IMR-90 (cell line): ENCODE measurements at regions of chr1 and their contacts with region 1.

Region 1: GRCh38 chr1:110495926-110496600 is 22.9 kb downstream of the KCNA10 start:
- DNase-seq: peak; percentile 71
- ATAC-seq: peak; percentile 96
- H3K4me3 ChIP-seq: no peak overlapping the region
- H3K27ac ChIP-seq: no peak overlapping the region
- H3K4me1 ChIP-seq: no peaks in the 10 kb centered on the region
- H3K27me3 ChIP-seq: peaks cover 22% of the 10 kb centered on the region
- CTCF ChIP-seq: peak; percentile 99; the same call in 1 of the 2 replicates
- POLR2A ChIP-seq: no peak
- RAD21 ChIP-seq: peak; percentile 100

Region 2: DNA sequence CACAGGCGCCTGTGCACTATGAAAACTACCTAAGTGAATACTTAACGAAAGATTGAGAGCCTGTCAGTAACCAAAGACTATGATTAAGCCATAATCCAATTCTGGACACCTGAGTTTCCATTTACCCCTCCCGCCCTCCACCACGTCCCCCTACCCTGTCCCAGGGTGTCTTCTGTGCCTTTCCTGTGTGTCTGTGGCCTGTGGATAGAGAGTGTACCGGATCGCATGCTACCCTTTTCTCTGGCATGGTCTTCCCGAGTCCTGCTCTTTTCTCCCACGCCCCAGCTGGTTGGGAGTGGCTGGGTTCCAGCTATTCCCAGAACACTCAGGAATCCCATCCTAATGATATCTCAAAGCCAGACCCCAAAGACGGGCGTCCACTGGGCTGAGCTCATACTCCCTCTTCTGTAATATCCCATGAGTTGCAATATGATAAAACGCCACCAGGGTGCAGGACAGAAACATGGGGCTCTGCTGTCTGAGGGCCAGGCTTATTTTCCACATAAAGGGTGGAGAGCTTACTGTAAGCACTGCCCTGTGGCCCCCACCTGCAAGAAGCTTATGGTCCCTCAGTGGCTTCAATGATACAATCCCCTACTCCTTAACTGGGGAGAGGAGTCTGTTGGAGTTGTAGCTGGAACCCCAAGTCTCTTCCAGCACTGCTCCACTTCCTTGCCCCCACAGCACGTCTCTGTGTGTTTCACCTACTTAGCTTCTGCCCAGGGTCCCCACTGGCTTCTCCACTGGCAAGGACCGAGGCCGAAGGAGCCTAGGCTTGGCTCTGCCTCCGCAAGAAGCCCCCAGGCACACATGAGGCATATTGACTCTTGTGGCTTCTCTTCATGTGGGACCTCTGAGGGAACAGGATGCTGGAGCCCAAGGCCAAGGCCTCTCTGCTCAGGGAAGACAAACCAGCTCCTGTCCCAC is 408.0 kb before region 1 on chr1:
- CTCF ChIA-PET with region 1: no interaction called
- POLR2A ChIA-PET with region 1: no interaction called
- dilution Hi-C with region 1: no loop called
- in situ Hi-C with region 1: no loop called
- intact Hi-C with region 1: loop called (anchors 5 kb)
- DNase-seq: peak; percentile 56
- ATAC-seq: peak; percentile 89
- H3K4me3 ChIP-seq: no peak overlapping the region
- H3K27ac ChIP-seq: no peak overlapping the region
- H3K4me1 ChIP-seq: no peaks in the 10 kb centered on the region; the same call in none of the 2 replicates
- H3K27me3 ChIP-seq: peaks cover 74% of the 10 kb centered on the region
- CTCF ChIP-seq: peak; percentile 70
- POLR2A ChIP-seq: no peak
- RAD21 ChIP-seq: peak; percentile 60

Region 3: DNA sequence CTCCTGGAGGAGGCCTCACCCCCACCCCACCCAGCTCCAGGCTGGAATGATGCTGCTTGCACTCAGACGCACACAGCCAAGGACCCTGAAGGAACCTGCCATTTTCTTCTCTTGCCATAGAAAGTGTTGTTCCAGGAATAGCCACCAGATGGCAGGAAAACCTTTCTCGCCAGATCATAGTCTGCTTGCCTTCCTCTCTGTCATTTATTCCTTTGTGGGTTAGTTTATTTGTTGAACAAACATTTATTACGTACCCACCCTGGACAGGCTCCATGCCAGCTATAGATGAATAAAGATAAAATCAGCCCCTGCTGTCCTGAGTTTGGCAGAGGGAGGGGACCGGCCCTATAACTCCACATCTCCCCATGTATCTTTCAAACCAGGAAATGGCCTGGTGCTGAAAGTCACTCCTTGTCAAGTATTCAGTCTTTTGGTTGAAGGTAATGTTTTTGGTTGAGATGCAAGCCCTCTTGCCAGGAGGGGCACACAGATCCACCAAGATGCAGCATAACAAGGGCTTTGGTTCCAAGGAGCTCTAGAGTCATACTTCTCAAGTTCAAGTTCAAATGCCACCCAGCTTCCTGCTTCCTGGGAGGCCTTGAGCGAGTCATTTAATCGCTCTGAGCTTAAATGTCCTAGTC is 292.9 kb before region 1 on chr1:
- CTCF ChIA-PET with region 1: interaction called, 31 read pairs
- POLR2A ChIA-PET with region 1: no interaction called
- dilution Hi-C with region 1: no loop called
- in situ Hi-C with region 1: no loop called
- intact Hi-C with region 1: loop called (anchors 1 kb)
- DNase-seq: peak; percentile 66
- ATAC-seq: peak; percentile 86
- H3K4me3 ChIP-seq: no peak overlapping the region
- H3K27ac ChIP-seq: no peak overlapping the region
- H3K4me1 ChIP-seq: 0 out of 2 replicates have a peak, but pooled peaks cover 1% of the 10 kb centered on the region
- H3K27me3 ChIP-seq: no peaks in the 10 kb centered on the region; the same call in 1 of the 2 replicates
- CTCF ChIP-seq: peak; percentile 85
- POLR2A ChIP-seq: no peak
- RAD21 ChIP-seq: peak; percentile 87

Region 4: GRCh38 chr1:110312188-110313121 is 183.6 kb before region 1 on chr1:
- CTCF ChIA-PET with region 1: interaction called, 3 read pairs
- POLR2A ChIA-PET with region 1: no interaction called
- dilution Hi-C with region 1: no loop called
- in situ Hi-C with region 1: no loop called
- intact Hi-C with region 1: loop called (anchors 1 kb)
- DNase-seq: peak; percentile 81
- ATAC-seq: peak; percentile 80
- H3K4me3 ChIP-seq: no peak overlapping the region
- H3K27ac ChIP-seq: no peak overlapping the region
- H3K4me1 ChIP-seq: peaks cover 12% of the 10 kb centered on the region
- H3K27me3 ChIP-seq: peaks cover 4% of the 10 kb centered on the region; the same call in 1 of the 2 replicates
- CTCF ChIP-seq: peak; percentile 98
- POLR2A ChIP-seq: no peak
- RAD21 ChIP-seq: peak; percentile 99

Region 5: GRCh38 chr1:110508038-110508940 is 12.2 kb after region 1 on chr1:
- CTCF ChIA-PET with region 1: interaction called, 10 read pairs
- POLR2A ChIA-PET with region 1: no interaction called
- dilution Hi-C with region 1: no loop called
- in situ Hi-C with region 1: no loop called
- intact Hi-C with region 1: no loop called
- DNase-seq: peak; percentile 9
- ATAC-seq: peak; percentile 93
- H3K4me3 ChIP-seq: no peak overlapping the region
- H3K27ac ChIP-seq: no peak overlapping the region
- H3K4me1 ChIP-seq: no peaks in the 10 kb centered on the region
- H3K27me3 ChIP-seq: peaks cover 38% of the 10 kb centered on the region
- CTCF ChIP-seq: no peak
- POLR2A ChIP-seq: no peak
- RAD21 ChIP-seq: no peak